ENCODE measurements at regions of chr5 and their contacts with region 1.

Region 1: DNA sequence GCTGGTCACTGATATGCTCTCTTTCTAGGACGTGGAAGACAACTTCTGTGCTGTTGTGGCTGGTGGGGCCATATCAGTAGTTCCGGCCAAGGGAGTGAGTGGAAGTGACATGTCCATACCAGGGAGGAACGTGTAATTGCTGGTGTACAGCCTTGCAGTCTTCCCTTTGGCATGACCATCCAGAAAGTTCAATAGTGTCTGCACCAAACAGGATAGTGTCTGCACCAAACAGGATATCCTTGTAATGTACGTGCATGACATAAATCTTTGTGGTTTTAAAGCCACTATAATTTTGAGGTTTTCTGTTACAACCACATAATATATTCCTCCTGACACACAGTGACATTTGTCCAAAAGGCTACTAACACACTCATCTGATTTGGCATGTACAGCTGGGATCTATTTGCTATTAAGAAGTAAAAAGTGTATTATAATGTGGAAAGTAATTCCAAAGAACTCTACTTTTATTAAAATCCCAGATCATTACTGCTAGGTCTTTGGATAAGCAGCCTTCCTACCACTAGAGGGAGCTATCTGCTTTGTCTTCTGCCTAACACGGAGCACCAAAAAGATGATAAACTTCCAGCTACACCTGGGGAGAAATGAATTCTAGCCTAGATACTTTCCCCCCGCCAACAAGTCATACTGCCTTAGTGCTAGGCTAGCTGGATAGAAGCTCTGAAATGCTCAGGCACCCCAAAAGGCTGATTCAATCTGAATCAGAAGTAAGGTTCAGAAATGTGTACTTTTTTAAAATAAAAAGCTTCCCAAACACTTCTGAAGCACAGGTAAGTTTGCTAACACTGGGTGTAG is 52.7 kb downstream of the RNF145 start:
- DNase-seq: no peak

Region 2: DNA sequence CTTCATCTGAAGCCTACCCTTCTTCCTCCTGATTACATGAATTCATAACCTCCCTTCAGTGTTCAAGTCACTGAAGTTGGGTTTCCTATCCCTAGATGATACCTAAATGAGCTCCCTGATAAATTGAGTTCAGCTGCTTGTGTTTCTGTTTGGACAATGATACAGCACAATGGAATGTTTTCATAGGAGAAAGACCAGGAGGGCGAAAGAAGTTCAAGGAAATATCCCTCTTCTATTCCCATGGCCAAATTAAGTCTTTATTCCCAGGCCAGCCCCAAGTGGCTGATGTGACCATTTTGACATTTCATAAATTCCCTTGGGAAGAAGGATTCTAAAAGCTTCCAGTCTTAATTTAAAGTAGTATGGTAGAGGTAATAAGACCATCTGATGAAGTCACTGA is 741.9 kb before region 1 on chr5:
- intact Hi-C with region 1: no loop called
- DNase-seq: no peak

Region 3: GRCh38 chr5:159209438-159210305 is 53.0 kb after region 1 on chr5 and contains the start of gene RNF145:
- intact Hi-C with region 1: loop called in 1 of 2 experiments (anchors 10 kb)
- DNase-seq: peak; percentile 95
- total RNA-seq, gene RNF145: 49.2 to 52.1 TPM

Region 4: DNA sequence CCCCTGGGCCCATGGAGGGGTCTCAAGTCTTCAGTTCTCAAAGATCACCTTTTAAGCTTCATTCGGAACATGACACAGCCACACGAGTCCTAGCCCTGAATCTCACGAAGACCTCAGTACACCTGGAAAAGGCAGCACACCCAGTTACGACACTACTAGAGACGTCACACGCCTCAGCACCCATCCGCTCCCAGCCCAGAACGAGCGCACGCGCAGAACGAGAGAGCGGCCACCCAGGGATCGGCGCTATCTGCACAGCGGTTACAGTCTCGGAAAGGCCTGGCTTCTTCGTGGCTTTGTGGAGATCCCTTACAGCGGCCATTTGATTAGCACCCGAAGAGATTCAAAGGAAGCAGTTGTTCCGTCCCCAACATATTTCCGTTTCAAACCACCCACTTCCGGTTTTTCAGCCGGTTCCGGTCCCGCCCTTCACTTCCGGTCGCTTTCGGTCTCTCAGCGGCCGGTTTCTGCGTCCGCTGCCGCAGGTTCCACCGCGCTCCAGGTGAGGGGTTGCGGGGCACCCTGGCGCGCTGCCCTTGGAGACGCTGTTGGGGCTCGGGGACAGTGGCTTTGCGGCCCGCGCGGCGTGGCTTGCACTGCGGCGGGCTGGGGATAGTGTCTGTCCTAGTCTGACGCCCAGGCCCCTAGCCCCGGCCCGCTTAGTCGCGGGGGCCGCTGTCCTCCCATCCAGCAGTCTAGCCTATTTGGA is 106.4 kb after region 1 on chr5 and contains the start of gene UBLCP1:
- intact Hi-C with region 1: loop called in 1 of 2 experiments (anchors 5 kb)
- DNase-seq: peak; percentile 92
- total RNA-seq, gene UBLCP1: 26.5 to 30.9 TPM